Activated CD4-positive, alpha-beta memory T cell treated with anti-CD3 and anti-CD28 coated beads for 36 hours (primary cell): ENCODE measurements at regions of chr1 and their contacts with region 1.

Region 1: GRCh38 chr1:29181413-29182225 is at the start of gene SRSF4:
- DNase-seq: peak; percentile 99
- H3K4me3 Mint-ChIP-seq: peak within 1 kb of the TSS; percentile 98
- H3K27ac Mint-ChIP-seq: peak within 1 kb of the TSS; percentile 98
- H3K4me1 Mint-ChIP-seq: peaks cover 44% of the 10 kb centered on the region
- H3K27me3 Mint-ChIP-seq: no peaks in the 10 kb centered on the region
- total RNA-seq, gene SRSF4: 133 to 136 TPM

Region 2: GRCh38 chr1:28642847-28643635 is 538.6 kb before region 1 on chr1 and contains the start of gene TAF12:
- CTCF ChIA-PET with region 1: no interaction called
- POLR2A ChIA-PET with region 1: interaction called, 14 read pairs
- intact Hi-C with region 1: loop called (anchors 1 kb)
- DNase-seq: peak; percentile 95
- H3K4me3 Mint-ChIP-seq: peak within 1 kb of the TSS; percentile 93
- H3K27ac Mint-ChIP-seq: peak within 1 kb of the TSS; percentile 96
- H3K4me1 Mint-ChIP-seq: peaks cover 45% of the 10 kb centered on the region
- H3K27me3 Mint-ChIP-seq: no peaks in the 10 kb centered on the region
- total RNA-seq, gene TAF12: 26.8 to 27.5 TPM

Region 3: GRCh38 chr1:28668191-28668955 is 513.2 kb before region 1 on chr1 and contains the start of gene GMEB1:
- CTCF ChIA-PET with region 1: no interaction called
- POLR2A ChIA-PET with region 1: interaction called, 7 read pairs
- intact Hi-C with region 1: loop called (anchors 2 kb)
- DNase-seq: peak; percentile 91
- H3K4me3 Mint-ChIP-seq: peak within 1 kb of the TSS; percentile 95
- H3K27ac Mint-ChIP-seq: peak within 1 kb of the TSS; percentile 99
- H3K4me1 Mint-ChIP-seq: peaks cover 12% of the 10 kb centered on the region
- H3K27me3 Mint-ChIP-seq: no peaks in the 10 kb centered on the region
- total RNA-seq, gene GMEB1: 21.4 to 22.6 TPM

Region 4: DNA sequence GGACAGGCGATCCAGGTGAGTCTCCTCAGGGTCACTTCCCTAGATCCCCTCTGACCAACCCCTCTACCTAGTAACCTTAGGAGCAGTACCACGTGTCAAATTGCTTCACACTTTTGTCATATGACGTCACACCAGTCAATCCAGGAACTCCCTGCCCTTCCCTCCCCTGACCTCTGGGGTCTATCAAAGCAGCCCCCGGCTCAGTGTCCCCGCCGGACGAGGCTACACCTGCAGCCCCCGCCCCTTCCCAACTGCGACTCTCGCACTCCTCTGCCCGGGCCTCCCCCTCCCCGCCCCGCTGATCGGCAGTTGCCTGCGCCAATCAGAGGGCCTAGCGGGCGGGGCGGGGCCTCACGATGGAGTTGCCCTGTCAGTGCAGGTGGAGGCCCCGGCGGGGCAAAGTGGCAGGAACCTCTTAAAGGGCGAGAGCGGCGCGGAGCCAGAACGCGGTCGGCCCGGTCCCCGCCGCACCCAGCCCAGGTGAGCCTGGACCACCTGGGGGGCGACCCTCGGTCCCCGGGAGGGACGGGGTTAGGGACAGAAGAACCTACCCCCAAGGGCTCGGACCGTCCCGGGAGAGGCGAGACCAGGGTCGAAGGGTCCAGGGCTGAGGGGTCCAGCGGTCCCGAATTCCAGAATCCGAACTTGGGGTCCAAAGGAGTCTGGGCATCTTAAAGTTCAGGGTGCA is 294.7 kb before region 1 on chr1:
- CTCF ChIA-PET with region 1: interaction called, 16 read pairs
- POLR2A ChIA-PET with region 1: interaction called, 3 read pairs
- intact Hi-C with region 1: loop called (anchors 2 kb)
- DNase-seq: peak; percentile 93
- H3K4me3 Mint-ChIP-seq: peak overlapping the region; percentile 80
- H3K27ac Mint-ChIP-seq: peak overlapping the region; percentile 91
- H3K4me1 Mint-ChIP-seq: peaks cover 52% of the 10 kb centered on the region
- H3K27me3 Mint-ChIP-seq: no peaks in the 10 kb centered on the region

Region 5: GRCh38 chr1:29171089-29171488 is 10.5 kb before region 1 on chr1:
- CTCF ChIA-PET with region 1: interaction called, 6 read pairs
- POLR2A ChIA-PET with region 1: interaction called, 16 read pairs
- intact Hi-C with region 1: no loop called
- DNase-seq: no peak
- H3K4me3 Mint-ChIP-seq: no peak overlapping the region
- H3K27ac Mint-ChIP-seq: peak overlapping the region; percentile 25
- H3K4me1 Mint-ChIP-seq: peaks cover 60% of the 10 kb centered on the region
- H3K27me3 Mint-ChIP-seq: no peaks in the 10 kb centered on the region

Region 6: GRCh38 chr1:29202584-29203340 is 21.1 kb after region 1 on chr1:
- CTCF ChIA-PET with region 1: interaction called, 69 read pairs
- POLR2A ChIA-PET with region 1: interaction called, 19 read pairs
- intact Hi-C with region 1: loop called (anchors 1 kb)
- DNase-seq: peak; percentile 94
- H3K4me3 Mint-ChIP-seq: no peak overlapping the region
- H3K27ac Mint-ChIP-seq: peak overlapping the region; percentile 23
- H3K4me1 Mint-ChIP-seq: peaks cover 6% of the 10 kb centered on the region
- H3K27me3 Mint-ChIP-seq: no peaks in the 10 kb centered on the region